CD14-positive monocyte (primary cell): ENCODE measurements at regions of chr14 and their contacts with region 1.

Region 1: DNA sequence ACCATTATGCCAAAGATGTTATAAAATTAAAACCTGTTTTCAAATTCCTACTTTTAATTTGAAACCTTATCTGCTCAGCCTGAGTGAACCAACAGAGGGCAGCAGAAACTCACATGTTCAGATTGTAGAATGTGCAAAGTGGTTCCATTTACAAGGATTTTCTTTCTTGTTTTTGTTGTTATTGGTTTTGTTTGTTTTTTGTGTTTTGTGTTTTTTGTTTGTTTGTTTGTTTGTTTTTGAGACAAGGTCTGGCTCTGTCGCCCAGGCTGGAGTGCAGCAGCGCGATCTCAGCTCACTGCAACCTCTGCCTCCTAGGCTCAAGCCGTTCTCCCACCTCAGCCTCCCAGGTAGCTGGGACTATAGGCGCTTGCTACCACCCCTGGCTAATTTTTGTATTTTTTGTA is 22.8 kb upstream of the GARIN2 start:
- DNase-seq: peak in 2 of 3 donors; percentile 7 to 8
- H3K4me3 ChIP-seq: no peak overlapping the region
- H3K4me3 Mint-ChIP-seq: no peak overlapping the region
- H3K27ac ChIP-seq: no peak overlapping the region
- H3K27ac Mint-ChIP-seq: no peak overlapping the region
- H3K4me1 ChIP-seq: no peaks in the 10 kb centered on the region
- H3K4me1 Mint-ChIP-seq: no peaks in the 10 kb centered on the region
- H3K27me3 ChIP-seq: no peaks in the 10 kb centered on the region
- H3K27me3 Mint-ChIP-seq: peaks cover 0 to 1% (median 0%) of the 10 kb centered on the region in 3 donors
- CTCF ChIP-seq: peak; percentile 60

Region 2: DNA sequence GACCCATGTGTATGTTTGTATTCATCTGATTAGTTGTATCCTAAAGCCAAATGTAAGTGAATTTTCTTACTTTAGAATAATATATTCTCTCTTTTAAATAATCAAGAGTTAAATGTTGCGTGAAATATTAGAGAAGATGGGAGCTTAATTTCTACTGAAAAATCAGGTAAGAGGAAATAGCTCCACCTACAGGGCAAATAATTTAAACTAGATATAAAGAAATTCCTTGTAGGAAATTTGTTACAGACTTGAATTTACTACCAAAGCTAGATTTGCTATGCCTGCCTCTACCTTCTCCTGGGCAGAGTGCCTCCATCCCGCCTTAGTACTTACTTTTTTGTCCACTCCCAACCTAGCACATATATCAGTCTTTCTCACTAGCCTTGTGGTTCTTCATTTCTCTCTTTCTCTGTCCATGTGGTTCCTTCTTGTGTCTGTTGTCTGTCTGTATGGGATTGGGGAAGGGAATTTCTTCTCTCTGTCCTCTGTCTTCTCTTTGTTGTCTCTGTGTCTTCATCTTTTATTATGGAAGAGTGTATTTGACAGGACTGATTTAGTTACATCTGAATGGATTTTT is 119.5 kb after region 1 on chr14:
- intact Hi-C with region 1: loop called (anchors 5 kb)
- DNase-seq: peak in 2 of 3 donors; percentile 7 to 38
- H3K4me3 ChIP-seq: no peak overlapping the region
- H3K4me3 Mint-ChIP-seq: no peak overlapping the region
- H3K27ac ChIP-seq: no peak overlapping the region
- H3K27ac Mint-ChIP-seq: no peak overlapping the region
- H3K4me1 ChIP-seq: no peaks in the 10 kb centered on the region
- H3K4me1 Mint-ChIP-seq: no peaks in the 10 kb centered on the region
- H3K27me3 ChIP-seq: no peaks in the 10 kb centered on the region
- H3K27me3 Mint-ChIP-seq: peaks cover 0 to 2% (median 0%) of the 10 kb centered on the region in 3 donors
- CTCF ChIP-seq: peak; percentile 76